Activated CD4-positive, alpha-beta T cell treated with anti-CD3 and anti-CD28 coated beads, Interleukin-2, amount 10 ng/mL, durations not matched to agents 24 days and 14 days (primary cell): ENCODE measurements at regions of chr12 and their contacts with region 1.

Region 1: GRCh38 chr12:108562348-108563135 is at the start of gene ISCU:
- DNase-seq: peak; percentile 100
- H3K4me3 Mint-ChIP-seq: peak within 1 kb of the TSS; percentile 99
- H3K27ac Mint-ChIP-seq: peak within 1 kb of the TSS; percentile 100
- H3K4me1 Mint-ChIP-seq: peaks cover 33% of the 10 kb centered on the region
- H3K27me3 Mint-ChIP-seq: no peaks in the 10 kb centered on the region
- total RNA-seq, gene ISCU: 61.5 and 66.1 TPM in 2 replicates

Region 2: GRCh38 chr12:108514973-108515814 is 47.3 kb before region 1 on chr12 and contains the start of gene FICD:
- intact Hi-C with region 1: loop called (anchors 1 kb)
- DNase-seq: peak; percentile 100
- H3K4me3 Mint-ChIP-seq: peak within 1 kb of the TSS; percentile 94
- H3K27ac Mint-ChIP-seq: peak within 1 kb of the TSS; percentile 84
- H3K4me1 Mint-ChIP-seq: peaks cover 31% of the 10 kb centered on the region
- H3K27me3 Mint-ChIP-seq: no peaks in the 10 kb centered on the region
- total RNA-seq, gene FICD: 5.9 and 6.6 TPM in 2 replicates

Region 3: DNA sequence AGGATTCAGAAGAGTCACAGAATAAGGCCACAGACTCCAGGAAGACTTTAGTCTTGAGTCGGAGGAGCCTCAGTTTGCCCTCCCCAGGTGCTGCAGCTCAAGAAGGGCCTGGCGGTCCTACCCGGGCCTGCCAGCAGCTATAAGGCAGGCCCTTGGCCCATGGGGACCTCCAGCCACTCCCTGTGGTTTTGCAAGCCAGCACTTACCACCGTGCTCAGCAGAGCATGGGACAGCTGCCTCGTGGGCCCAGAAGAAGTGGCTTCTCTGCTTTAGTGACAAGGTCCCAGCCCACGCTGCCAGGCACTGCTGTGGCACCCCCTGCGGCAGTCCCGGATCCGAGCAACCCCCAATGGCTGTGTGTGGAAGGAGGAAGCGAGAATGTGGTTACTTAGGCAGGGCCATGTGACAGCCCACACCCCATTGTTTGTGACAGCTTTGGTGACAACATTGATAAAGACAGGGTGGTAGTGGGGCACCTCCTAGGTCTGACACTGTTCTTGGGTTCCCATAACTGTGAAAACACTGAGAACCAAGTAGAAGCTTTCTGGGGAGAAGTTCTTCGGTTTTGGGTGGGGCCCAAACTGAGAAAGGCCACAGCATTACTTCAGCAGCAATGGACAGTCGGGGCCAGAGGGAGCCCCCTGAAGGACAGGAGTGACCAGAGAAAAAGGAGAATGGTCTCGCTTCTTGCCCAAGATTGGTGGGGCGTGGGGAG is 71.1 kb after region 1 on chr12 and contains the start of gene SELPLG:
- intact Hi-C with region 1: loop called (anchors 1 kb)
- DNase-seq: peak; percentile 95
- H3K4me3 Mint-ChIP-seq: peak within 1 kb of the TSS; percentile 98
- H3K27ac Mint-ChIP-seq: peak within 1 kb of the TSS; percentile 99
- H3K4me1 Mint-ChIP-seq: peaks cover 73% of the 10 kb centered on the region
- H3K27me3 Mint-ChIP-seq: no peaks in the 10 kb centered on the region
- total RNA-seq, gene SELPLG: 47.4 and 49.4 TPM in 2 replicates

Region 4: GRCh38 chr12:108691175-108691997 is 128.8 kb after region 1 on chr12:
- intact Hi-C with region 1: loop called (anchors 2 kb)
- DNase-seq: peak; percentile 88
- H3K4me3 Mint-ChIP-seq: peak overlapping the region; percentile 77
- H3K27ac Mint-ChIP-seq: peak overlapping the region; percentile 97
- H3K4me1 Mint-ChIP-seq: peaks cover 66% of the 10 kb centered on the region
- H3K27me3 Mint-ChIP-seq: no peaks in the 10 kb centered on the region

Region 5: GRCh38 chr12:108803428-108804105 is 241.0 kb after region 1 on chr12:
- intact Hi-C with region 1: loop called (anchors 1 kb)
- DNase-seq: peak; percentile 92
- H3K4me3 Mint-ChIP-seq: no peak overlapping the region
- H3K27ac Mint-ChIP-seq: peak overlapping the region; percentile 78
- H3K4me1 Mint-ChIP-seq: peaks cover 10% of the 10 kb centered on the region
- H3K27me3 Mint-ChIP-seq: no peaks in the 10 kb centered on the region

Region 6: GRCh38 chr12:108950991-108951739 is 388.6 kb after region 1 on chr12:
- intact Hi-C with region 1: loop called (anchors 5 kb)
- DNase-seq: peak; percentile 90
- H3K4me3 Mint-ChIP-seq: no peak overlapping the region
- H3K27ac Mint-ChIP-seq: no peak overlapping the region
- H3K4me1 Mint-ChIP-seq: no peaks in the 10 kb centered on the region
- H3K27me3 Mint-ChIP-seq: peaks cover 14% of the 10 kb centered on the region

Region 7: DNA sequence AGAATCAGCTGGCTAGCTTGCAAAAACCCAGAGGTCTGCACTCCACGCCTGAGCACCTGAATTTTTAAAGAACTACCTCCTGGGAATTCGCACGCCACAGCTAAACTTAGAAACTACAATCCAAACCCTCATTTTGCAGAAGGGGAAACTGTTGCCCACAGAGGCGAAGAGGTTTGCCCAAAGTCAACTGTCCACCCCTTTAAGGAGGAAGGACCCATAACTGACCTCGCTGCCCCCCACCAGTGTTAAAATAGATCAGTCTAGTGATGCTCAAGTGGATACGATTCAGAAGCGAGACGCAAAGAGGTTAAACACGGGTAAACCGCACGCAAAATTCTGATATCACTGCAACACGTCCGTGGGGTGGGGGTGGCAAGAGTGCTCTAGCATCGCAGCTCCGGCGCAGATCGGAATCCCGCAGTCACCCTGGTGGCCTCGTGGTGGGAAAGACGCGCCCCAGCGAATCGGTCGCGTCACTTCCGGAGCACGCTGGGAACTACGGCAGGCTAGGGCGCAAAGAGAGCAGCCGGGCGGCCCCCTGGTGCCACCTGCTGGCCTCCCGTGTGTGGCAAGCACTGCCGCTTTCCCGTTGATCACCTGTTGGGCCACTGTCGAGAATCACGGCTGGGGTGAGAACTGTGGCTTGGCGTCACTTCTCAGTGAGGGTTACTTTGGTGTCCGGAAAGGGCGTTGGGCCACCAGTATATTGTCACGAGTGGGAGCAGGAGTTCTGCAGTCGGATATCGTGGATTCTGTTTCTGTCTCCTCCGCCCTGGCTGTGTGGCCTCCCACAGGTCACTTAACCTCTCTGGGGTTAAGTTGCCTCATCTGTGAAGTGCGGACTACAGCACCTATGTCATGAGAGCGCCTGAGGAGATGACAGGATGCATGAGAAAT is 530.7 kb after region 1 on chr12 and contains the start of gene ALKBH2:
- intact Hi-C with region 1: loop called (anchors 1 kb)
- DNase-seq: peak; percentile 98
- H3K4me3 Mint-ChIP-seq: peak within 1 kb of the TSS; percentile 82
- H3K27ac Mint-ChIP-seq: peak within 1 kb of the TSS; percentile 84
- H3K4me1 Mint-ChIP-seq: peaks cover 40% of the 10 kb centered on the region
- H3K27me3 Mint-ChIP-seq: no peaks in the 10 kb centered on the region
- total RNA-seq, gene ALKBH2: 44.8 and 46.2 TPM in 2 replicates